ENCODE measurements at regions of chr12 and their contacts with region 1.

Region 1: GRCh38 chr12:130334937-130335336 is 2.8 kb upstream of the PIWIL1 start:
- DNase-seq: no peak
- H3K4me3 ChIP-seq: no peak overlapping the region
- H3K27ac ChIP-seq: no peak overlapping the region
- H3K4me1 ChIP-seq: peaks cover 0 to 11% (median 2%) of the 10 kb centered on the region in 4 donors
- H3K27me3 ChIP-seq: peaks cover 0 to 22% of the 10 kb centered on the region in 2 donors
- CTCF ChIP-seq: no peak

Region 2: GRCh38 chr12:130044991-130045621 is 289.8 kb before region 1 on chr12:
- intact Hi-C with region 1: loop called (anchors 5 kb)
- DNase-seq: no peak
- H3K4me3 ChIP-seq: no peak overlapping the region
- H3K27ac ChIP-seq: no peak overlapping the region
- H3K4me1 ChIP-seq: no peaks in the 10 kb centered on the region
- H3K27me3 ChIP-seq: peaks cover 0 to 62% of the 10 kb centered on the region in 2 donors
- CTCF ChIP-seq: no peak

Measured in tibial artery (tissue), 4 donors.